ENCODE measurements at regions of chr5 and their contacts with region 1.

Region 1: DNA sequence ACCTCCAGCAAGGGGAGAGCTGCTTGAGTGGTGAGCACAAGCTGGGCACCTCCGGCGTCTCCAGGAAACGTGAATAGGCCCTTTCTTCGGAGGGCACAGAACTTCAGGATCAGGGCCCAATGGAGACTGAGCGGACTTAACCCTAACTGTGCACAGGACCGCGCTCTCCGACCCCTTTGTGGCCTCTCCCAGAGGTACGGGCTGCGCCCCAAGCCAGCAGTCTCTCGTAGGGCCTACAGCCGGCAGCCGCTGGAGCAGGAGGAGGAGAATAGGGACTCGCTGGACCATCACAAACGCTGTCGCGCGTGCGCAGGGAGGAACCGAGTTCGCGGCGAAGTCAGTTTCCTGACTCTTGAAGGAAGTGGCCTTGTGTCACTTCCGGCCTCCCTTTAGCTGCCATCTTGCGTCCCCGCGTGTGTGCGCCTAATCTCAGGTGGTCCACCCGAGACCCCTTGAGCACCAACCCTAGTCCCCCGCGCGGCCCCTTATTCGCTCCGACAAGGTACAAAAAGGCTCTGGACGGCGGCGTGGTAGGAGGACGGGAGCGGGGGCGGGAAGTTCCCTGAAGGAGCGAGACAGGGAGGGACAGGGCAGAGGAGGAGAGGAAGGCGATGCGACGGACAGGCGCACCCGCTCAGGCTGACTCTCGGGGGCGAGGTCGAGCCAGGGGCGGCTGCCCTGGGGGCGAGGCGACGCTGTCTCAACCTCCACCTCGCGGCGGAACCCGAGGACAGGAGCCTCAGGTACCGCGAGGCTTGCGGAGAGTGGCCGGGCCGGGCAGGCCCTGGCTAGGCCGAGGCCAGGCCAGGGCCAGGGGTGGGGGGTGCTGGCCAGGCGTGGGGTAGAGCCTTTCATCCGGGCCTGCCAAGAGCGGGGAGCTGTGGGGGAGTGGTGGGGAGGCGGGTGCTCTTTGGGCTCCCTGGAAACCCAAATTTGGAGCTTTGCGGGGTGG is at the start of gene BTF3:
- DNase-seq: peak; percentile 92
- H3K4me3 ChIP-seq: peak within 1 kb of the TSS; percentile 86
- H3K27ac ChIP-seq: peak within 1 kb of the TSS; percentile 88
- H3K27me3 ChIP-seq: no peaks in the 10 kb centered on the region
- CTCF ChIP-seq: no peak
- polyA plus RNA-seq, gene BTF3: 707 and 755 TPM in 2 replicates

Region 2: DNA sequence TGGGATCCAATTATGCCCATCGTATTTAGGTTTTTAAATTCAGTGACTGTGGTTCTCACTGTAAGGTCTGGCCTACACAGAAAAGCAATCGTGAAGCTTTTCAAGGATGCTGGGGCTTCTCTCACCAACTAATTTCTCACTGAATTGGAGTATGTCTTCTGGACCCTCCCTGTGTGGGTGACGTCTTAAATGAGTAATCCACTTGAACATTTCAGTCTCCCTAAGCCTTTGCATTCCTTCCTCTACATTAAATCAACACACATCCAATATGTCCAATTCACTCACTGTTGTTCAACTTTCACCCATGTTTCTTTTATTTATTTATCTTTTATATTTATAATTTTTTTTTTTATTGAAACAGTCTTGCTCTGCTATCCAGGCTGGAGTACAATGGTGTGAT is 12.6 kb before region 1 on chr5:
- CTCF ChIA-PET with region 1: interaction called, 20 read pairs
- POLR2A ChIA-PET with region 1: interaction called, 5 read pairs
- DNase-seq: peak; percentile 18
- H3K4me3 ChIP-seq: no peak overlapping the region
- H3K27ac ChIP-seq: no peak overlapping the region
- H3K27me3 ChIP-seq: peaks cover 7% of the 10 kb centered on the region
- CTCF ChIP-seq: no peak

Measured in AG04450 (cell line).